ENCODE measurements at regions of chr2 and their contacts with region 1.

Region 1: DNA sequence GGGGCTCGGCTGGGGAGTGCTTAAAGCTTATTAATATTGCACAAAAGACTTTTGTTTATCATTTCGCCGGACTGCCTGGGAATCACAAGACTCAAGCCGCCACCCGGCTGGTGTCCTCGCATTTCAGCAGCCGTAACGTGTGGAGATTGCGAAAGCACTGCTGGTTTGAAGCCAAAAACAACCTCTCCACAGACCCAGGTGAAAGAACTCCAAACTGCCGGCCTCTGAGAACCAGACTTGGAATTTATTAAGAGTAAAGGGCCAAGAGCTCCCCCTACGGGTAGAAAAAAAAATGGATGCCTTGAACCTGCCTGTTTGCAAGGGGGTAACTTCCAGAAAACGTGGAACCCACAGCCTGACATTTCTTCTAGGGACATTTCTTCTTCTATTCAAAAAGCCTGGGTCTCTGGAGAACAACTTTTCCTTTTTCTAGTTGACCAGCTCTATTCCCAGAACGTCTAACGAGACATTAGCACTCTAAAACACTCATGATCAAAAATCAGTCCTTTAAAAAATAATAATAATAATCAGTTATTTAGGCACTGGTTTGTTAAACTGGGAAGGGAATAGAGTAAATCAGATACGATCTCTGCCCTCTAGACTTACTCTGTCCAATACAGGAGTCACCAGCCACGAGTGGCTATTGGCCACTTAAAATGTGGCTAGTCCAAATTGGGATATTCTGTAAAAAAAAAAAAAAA is 216.3 kb downstream of the C1D start:
- DNase-seq: peak; percentile 18
- H3K4me3 Mint-ChIP-seq: no peak overlapping the region
- H3K27ac Mint-ChIP-seq: no peak overlapping the region
- H3K4me1 Mint-ChIP-seq: no peaks in the 10 kb centered on the region
- H3K27me3 Mint-ChIP-seq: peaks cover 21% of the 10 kb centered on the region

Region 2: GRCh38 chr2:68031542-68032160 is 185.1 kb after region 1 on chr2:
- CTCF ChIA-PET with region 1: interaction called, 7 read pairs
- POLR2A ChIA-PET with region 1: no interaction called
- intact Hi-C with region 1: loop called (anchors 5 kb)
- DNase-seq: no peak
- H3K4me3 Mint-ChIP-seq: no peak overlapping the region
- H3K27ac Mint-ChIP-seq: no peak overlapping the region
- H3K4me1 Mint-ChIP-seq: no peaks in the 10 kb centered on the region
- H3K27me3 Mint-ChIP-seq: no peaks in the 10 kb centered on the region

Region 3: GRCh38 chr2:68041704-68042245 is 195.3 kb after region 1 on chr2:
- CTCF ChIA-PET with region 1: no interaction called
- POLR2A ChIA-PET with region 1: no interaction called
- intact Hi-C with region 1: no loop called
- DNase-seq: no peak
- H3K4me3 Mint-ChIP-seq: no peak overlapping the region
- H3K27ac Mint-ChIP-seq: no peak overlapping the region
- H3K4me1 Mint-ChIP-seq: no peaks in the 10 kb centered on the region
- H3K27me3 Mint-ChIP-seq: no peaks in the 10 kb centered on the region

Measured in activated CD4-positive, alpha-beta memory T cell treated with anti-CD3 and anti-CD28 coated beads for 36 hours (primary cell).